PC-9 (cell line): ENCODE measurements at regions of chr2 and their contacts with region 1.

Region 1: GRCh38 chr2:54455563-54456361 is at the start of gene SPTBN1:
- DNase-seq: peak; percentile 45 to 86
- H3K4me3 ChIP-seq: peak within 1 kb of the TSS; percentile 68
- H3K27ac ChIP-seq: no peak within 1 kb of the TSS
- H3K4me1 ChIP-seq: peaks cover 28% of the 10 kb centered on the region
- H3K27me3 ChIP-seq: no peaks in the 10 kb centered on the region; the same call in 1 of the 2 replicates
- CTCF ChIP-seq: no peak
- total RNA-seq, gene SPTBN1: 234 and 262 TPM in 2 replicates

Region 2: GRCh38 chr2:54115284-54116137 is 340.3 kb before region 1 on chr2 and contains the start of gene ACYP2:
- CTCF ChIA-PET with region 1: no interaction called
- POLR2A ChIA-PET with region 1: no interaction called
- intact Hi-C with region 1: loop called (anchors 10 kb)
- DNase-seq: peak; percentile 91 to 97
- H3K4me3 ChIP-seq: peak within 1 kb of the TSS; percentile 79
- H3K27ac ChIP-seq: peak within 1 kb of the TSS; percentile 96
- H3K4me1 ChIP-seq: peaks cover 6% of the 10 kb centered on the region
- H3K27me3 ChIP-seq: no peaks in the 10 kb centered on the region
- CTCF ChIP-seq: peak; percentile 55
- total RNA-seq, gene ACYP2: 23.9 and 25.9 TPM in 2 replicates

Region 3: GRCh38 chr2:54330162-54330925 is 125.4 kb before region 1 on chr2:
- CTCF ChIA-PET with region 1: no interaction called
- POLR2A ChIA-PET with region 1: interaction called, 4 read pairs
- intact Hi-C with region 1: loop called (anchors 1 kb)
- DNase-seq: peak; percentile 93 to 98
- H3K4me3 ChIP-seq: peak overlapping the region; percentile 74
- H3K27ac ChIP-seq: 0 out of 2 replicates have a peak overlapping the region, but pooled peaks have one; percentile 6
- H3K4me1 ChIP-seq: peaks cover 15% of the 10 kb centered on the region
- H3K27me3 ChIP-seq: no peaks in the 10 kb centered on the region
- CTCF ChIP-seq: no peak

Region 4: GRCh38 chr2:54482715-54483114 is 27.0 kb after region 1 on chr2:
- CTCF ChIA-PET with region 1: no interaction called
- POLR2A ChIA-PET with region 1: no interaction called
- intact Hi-C with region 1: loop called (anchors 1 kb)
- DNase-seq: peak in 1 of 2 experiments; percentile 70
- H3K4me3 ChIP-seq: no peak overlapping the region
- H3K27ac ChIP-seq: no peak overlapping the region
- H3K4me1 ChIP-seq: peaks cover 26% of the 10 kb centered on the region
- H3K27me3 ChIP-seq: no peaks in the 10 kb centered on the region
- CTCF ChIP-seq: no peak

Region 5: GRCh38 chr2:54570925-54571694 is 115.3 kb after region 1 on chr2:
- CTCF ChIA-PET with region 1: no interaction called
- POLR2A ChIA-PET with region 1: no interaction called
- intact Hi-C with region 1: loop called (anchors 2 kb)
- DNase-seq: peak; percentile 69 to 73
- H3K4me3 ChIP-seq: peak overlapping the region; percentile 33; the same call in 1 of the 2 replicates
- H3K27ac ChIP-seq: peak overlapping the region; percentile 97
- H3K4me1 ChIP-seq: peaks cover 83% of the 10 kb centered on the region
- H3K27me3 ChIP-seq: no peaks in the 10 kb centered on the region
- CTCF ChIP-seq: no peak